Activated CD8-positive, alpha-beta memory T cell treated with anti-CD3 and anti-CD28 coated beads, Interleukin-2, amount 10 ng/mL, durations not matched to agents 7 days and 5 days (primary cell): ENCODE measurements at regions of chr7 and their contacts with region 1.

Region 1: DNA sequence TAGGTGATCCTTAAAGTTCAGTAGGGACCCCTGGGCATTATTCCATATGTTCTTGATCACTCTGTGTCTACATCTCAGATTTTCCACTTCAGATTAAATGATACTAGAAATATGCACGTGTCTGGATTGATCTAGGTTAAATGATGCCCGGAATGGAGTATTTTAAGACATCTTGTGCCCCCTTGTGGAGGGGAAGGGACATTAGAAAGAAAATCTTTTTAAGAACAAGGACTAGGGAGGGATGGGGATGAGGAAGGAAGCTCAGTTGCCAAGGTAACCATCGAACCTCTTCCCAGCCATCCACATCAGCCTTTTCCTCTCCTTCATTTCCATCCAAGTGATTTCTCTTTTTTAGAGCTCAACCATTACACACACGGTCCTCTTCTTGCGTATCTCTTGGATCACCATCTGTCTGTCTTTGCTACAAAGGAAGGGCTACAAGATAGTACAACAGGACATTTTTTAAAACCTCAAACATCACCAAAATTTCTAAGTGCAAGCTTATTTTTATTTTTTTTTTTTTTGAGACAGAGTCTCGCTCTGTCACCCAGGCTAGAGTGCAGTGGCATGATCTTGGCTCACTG is 40.5 kb downstream of the PRSS2 start:
- DNase-seq: no peak
- ATAC-seq: no peak
- H3K4me3 Mint-ChIP-seq: peak overlapping the region; percentile 25
- H3K27ac Mint-ChIP-seq: peak overlapping the region; percentile 84
- H3K4me1 Mint-ChIP-seq: peaks cover 68% of the 10 kb centered on the region
- H3K27me3 Mint-ChIP-seq: no peaks in the 10 kb centered on the region

Region 2: DNA sequence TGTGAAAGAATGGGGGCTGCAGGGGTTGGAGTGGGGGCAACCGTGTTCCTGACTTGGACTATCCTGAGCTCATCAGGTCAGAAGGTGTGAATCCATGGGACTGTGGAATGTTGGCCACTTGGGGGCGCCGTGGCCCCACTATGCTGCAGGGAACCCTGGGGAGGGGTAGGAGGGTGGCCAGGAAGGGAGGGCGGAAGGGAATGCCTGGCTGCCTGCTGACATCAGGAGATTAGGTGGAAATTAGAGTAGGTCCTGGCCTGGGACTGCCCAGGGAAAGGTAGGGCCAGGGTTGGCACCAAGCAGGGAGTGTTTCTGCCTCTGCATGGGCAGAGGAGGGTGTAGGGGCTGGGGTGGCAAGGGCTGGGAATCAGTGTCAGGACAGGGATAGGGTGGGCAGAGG is 487.5 kb before region 1 on chr7:
- CTCF ChIA-PET with region 1: interaction called, 11 read pairs
- DNase-seq: peak; percentile 59
- ATAC-seq: peak; percentile 62
- H3K4me3 Mint-ChIP-seq: no peak overlapping the region
- H3K27ac Mint-ChIP-seq: peak overlapping the region; percentile 70
- H3K4me1 Mint-ChIP-seq: peaks cover 10% of the 10 kb centered on the region
- H3K27me3 Mint-ChIP-seq: peaks cover 5% of the 10 kb centered on the region

Region 3: DNA sequence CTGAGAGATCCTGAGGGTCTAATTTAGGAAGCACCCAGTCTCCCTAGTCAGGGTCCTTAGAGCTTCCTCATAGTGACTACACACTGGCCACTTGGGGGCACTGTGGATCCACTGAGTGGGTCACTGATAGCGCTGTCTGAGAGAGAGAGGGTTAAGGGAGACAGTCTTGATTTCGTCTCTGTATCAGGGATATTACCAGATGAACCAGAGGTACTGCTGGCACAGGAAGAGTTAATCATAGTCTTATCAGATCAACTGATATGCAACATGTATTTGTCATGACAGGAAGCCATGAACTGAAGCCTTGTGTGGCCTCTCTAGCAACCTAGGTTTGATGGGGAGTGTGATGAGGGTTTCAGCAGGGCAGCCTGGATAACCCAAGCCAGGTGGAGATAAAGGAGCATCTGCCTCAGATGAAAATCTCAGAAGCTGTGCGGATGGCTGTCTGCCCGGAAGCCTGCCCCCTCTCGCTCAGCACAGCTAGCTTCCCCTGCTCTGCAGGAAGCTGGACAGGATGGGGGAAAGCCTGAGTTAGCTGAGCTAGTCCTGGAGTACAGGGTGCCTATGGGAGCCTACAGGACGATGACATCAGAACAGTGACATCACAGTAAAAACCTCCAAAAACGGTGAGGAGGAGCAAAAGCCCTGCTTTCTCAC is 276.0 kb before region 1 on chr7:
- CTCF ChIA-PET with region 1: interaction called, 32 read pairs
- DNase-seq: peak; percentile 87
- ATAC-seq: peak; percentile 92
- H3K4me3 Mint-ChIP-seq: peak overlapping the region; percentile 69
- H3K27ac Mint-ChIP-seq: peak overlapping the region; percentile 86
- H3K4me1 Mint-ChIP-seq: peaks cover 29% of the 10 kb centered on the region
- H3K27me3 Mint-ChIP-seq: peaks cover 7% of the 10 kb centered on the region

Region 4: DNA sequence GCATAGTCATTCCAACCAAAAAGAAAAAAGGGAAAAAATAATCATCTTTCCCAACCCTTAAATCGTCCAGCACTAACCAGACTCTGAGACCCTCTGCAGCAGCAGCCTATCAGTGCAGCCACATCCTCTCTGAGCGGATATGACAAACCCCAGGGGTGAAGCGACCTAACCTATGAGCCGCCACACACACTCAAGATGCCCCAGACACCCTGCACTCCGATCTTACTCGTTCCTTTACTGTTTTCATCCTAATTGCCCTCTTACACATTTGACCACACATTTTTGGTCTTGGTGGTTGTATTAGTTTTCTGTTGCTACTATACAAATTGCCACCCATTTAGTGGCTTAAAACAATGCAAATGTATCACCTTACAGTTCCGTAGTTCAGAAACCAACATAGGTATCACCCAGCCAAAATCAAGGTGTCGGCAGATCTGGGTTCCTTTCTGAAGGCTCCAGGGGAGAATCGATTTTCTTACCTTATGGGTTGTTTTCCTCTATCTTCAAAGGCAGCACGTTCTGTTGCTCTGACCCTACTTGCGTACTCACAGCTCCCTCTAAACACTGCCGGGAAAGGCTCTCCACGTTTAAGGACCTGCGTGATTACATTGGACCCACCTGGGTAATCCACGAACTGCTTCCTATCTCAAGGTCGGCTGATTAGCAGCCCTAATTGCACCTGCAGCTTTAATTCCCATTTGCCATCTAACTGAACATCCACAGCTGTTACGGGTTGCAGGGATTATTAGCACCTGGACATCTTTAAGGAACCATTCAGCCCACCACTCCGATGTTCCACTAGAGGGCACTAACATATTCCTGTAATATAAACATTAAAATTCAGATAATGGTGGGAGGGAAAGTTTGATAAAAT is 99.3 kb before region 1 on chr7:
- CTCF ChIA-PET with region 1: interaction called, 16 read pairs
- DNase-seq: peak; percentile 77
- ATAC-seq: peak; percentile 83
- H3K4me3 Mint-ChIP-seq: peak overlapping the region; percentile 73
- H3K27ac Mint-ChIP-seq: peak overlapping the region; percentile 94
- H3K4me1 Mint-ChIP-seq: peaks cover 73% of the 10 kb centered on the region
- H3K27me3 Mint-ChIP-seq: no peaks in the 10 kb centered on the region

Region 5: DNA sequence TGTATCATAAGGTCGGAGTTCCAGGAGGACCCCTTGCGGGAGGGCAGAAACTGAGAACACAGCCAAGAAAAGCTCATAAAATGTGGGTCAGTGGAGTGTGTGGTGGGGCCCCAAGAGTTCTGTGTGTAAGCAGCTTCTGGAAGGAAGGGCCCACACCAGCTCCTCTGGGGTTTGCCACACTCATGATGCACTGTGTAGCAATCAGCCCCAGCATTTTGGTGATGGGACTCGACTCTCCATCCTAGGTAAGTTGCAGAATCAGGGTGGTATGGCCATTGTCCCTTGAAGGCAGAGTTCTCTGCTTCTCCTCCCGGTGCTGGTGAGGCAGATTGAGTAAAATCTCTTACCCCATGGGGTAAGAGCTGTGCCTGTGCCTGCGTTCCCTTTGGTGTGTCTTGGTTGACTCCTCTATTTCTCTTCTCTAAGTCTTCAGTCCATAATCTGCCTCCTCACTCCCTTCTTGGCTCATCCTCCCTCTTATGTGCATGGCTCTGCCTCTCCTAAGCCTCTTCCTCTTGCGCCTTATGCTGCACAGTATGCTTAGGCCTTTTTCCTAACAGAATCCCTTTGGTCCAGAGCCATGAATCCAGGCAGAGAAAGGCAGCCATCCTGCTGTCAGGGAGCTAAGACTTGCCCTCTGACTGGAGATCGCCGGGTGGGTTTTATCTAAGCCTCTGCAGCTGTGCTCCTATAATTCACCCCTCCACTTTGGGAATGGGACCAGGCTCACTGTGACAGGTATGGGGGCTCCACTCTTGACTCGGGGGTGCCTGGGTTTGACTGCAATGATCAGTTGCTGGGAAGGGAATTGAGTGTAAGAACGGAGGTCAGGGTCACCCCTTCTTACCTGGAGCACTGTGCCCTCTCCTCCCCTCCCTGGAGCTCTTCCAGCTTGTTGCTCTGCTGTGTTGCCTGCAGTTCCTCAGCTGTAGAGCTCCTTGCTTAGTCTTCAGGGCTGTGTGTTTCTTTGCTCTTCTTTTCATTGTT is 22.6 kb before region 1 on chr7:
- CTCF ChIA-PET with region 1: interaction called, 103 read pairs
- DNase-seq: no peak
- ATAC-seq: no peak
- H3K4me3 Mint-ChIP-seq: peak overlapping the region; percentile 99
- H3K27ac Mint-ChIP-seq: peak overlapping the region; percentile 97
- H3K4me1 Mint-ChIP-seq: peaks cover 33% of the 10 kb centered on the region
- H3K27me3 Mint-ChIP-seq: no peaks in the 10 kb centered on the region

Region 6: DNA sequence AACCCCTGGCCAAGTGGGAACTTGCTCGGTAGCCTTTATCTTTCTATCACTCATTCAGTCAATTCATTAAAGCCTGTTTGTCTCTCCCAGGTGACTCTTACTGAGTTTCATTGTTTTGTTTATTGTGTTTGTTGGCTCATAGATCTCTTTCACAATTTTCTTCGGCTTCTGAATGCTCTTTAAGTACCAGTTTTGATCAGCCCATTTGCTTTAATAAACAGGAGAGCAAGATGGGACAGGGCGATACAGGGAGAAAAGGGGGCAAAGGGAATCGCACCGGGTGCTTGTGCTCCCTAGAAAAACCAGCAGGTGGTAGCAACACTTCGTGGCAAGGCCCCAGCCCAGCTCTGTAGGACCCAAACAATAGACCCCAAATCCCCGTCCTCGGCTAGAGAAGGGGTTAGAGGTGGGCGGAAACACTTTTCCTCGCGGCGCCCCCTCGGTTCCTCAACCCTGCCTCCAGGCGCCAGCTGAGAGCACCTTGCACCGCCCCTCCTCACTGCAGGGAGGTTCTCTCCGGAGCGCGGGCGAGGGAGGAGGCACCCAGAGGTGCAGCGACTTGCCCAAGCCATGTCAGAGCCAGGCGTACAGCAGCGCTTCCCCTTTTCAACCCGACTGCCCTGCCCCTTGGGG is 42.6 kb after region 1 on chr7:
- CTCF ChIA-PET with region 1: interaction called, 10 read pairs
- DNase-seq: peak; percentile 78
- ATAC-seq: peak; percentile 84
- H3K4me3 Mint-ChIP-seq: peak overlapping the region; percentile 88
- H3K27ac Mint-ChIP-seq: peak overlapping the region; percentile 77
- H3K4me1 Mint-ChIP-seq: peaks cover 4% of the 10 kb centered on the region
- H3K27me3 Mint-ChIP-seq: peaks cover 15% of the 10 kb centered on the region